Activated CD4-positive, alpha-beta T cell treated with anti-CD3 and anti-CD28 coated beads for 36 hours (primary cell): ENCODE measurements at regions of chr21 and their contacts with region 1.

Region 1: GRCh38 chr21:35217504-35218060 is 168.5 kb upstream of the RUNX1 start:
- DNase-seq: peak; percentile 71
- ATAC-seq: peak; percentile 93
- H3K4me3 Mint-ChIP-seq: no peak overlapping the region
- H3K27ac Mint-ChIP-seq: peak overlapping the region; percentile 85
- H3K4me1 Mint-ChIP-seq: peaks cover 28% of the 10 kb centered on the region
- H3K27me3 Mint-ChIP-seq: no peaks in the 10 kb centered on the region

Region 2: GRCh38 chr21:35204850-35205541 is 12.6 kb before region 1 on chr21:
- CTCF ChIA-PET with region 1: interaction called, 14 read pairs
- POLR2A ChIA-PET with region 1: no interaction called
- intact Hi-C with region 1: no loop called
- DNase-seq: peak; percentile 30
- ATAC-seq: peak; percentile 53
- H3K4me3 Mint-ChIP-seq: peak overlapping the region; percentile 60
- H3K27ac Mint-ChIP-seq: peak overlapping the region; percentile 86
- H3K4me1 Mint-ChIP-seq: peaks cover 30% of the 10 kb centered on the region
- H3K27me3 Mint-ChIP-seq: no peaks in the 10 kb centered on the region